Activated T-helper 1 cell treated with anti-CD3 and anti-CD28 coated beads, Interleukin-12 subunit alpha, Interleukin-12 subunit beta, Interleukin-2, Interleukin-4 antibody, amounts not matched to agents 30 ng/mL and 10 ng/mL and 1 ng/mL, durations not matched to agents 14 hours and 24 hours and 36 hours (primary cell): ENCODE measurements at regions of chr6 and their contacts with region 1.

Region 1: GRCh38 chr6:131683479-131683878 is 17.7 kb downstream of the OR2A4 start:
- DNase-seq: no peak
- H3K4me3 Mint-ChIP-seq: no peak overlapping the region
- H3K27ac Mint-ChIP-seq: no peak overlapping the region
- H3K4me1 Mint-ChIP-seq: peaks cover 24% of the 10 kb centered on the region
- H3K27me3 Mint-ChIP-seq: peaks cover 4% of the 10 kb centered on the region

Region 2: GRCh38 chr6:131807644-131808459 is 124.4 kb after region 1 on chr6 and contains the start of gene ENPP1:
- intact Hi-C with region 1: loop called (anchors 10 kb)
- DNase-seq: peak; percentile 17
- H3K4me3 Mint-ChIP-seq: peak within 1 kb of the TSS; percentile 82
- H3K27ac Mint-ChIP-seq: no peak within 1 kb of the TSS
- H3K4me1 Mint-ChIP-seq: peaks cover 7% of the 10 kb centered on the region
- H3K27me3 Mint-ChIP-seq: peaks cover 53% of the 10 kb centered on the region
- total RNA-seq, gene ENPP1: 1.0 and 1.2 TPM in 2 replicates